ENCODE measurements at regions of chr2 and their contacts with region 1.

Region 1: GRCh38 chr2:162318328-162319180 is at the start of gene IFIH1:
- DNase-seq: peak; percentile 60 to 86 (median 73)
- ATAC-seq: peak; percentile 93
- H3K4me3 ChIP-seq: peak within 1 kb of the TSS; percentile 93
- H3K4me3 Mint-ChIP-seq: peak within 1 kb of the TSS; percentile 89 to 100 (median 95)
- H3K27ac ChIP-seq: peak within 1 kb of the TSS; percentile 85
- H3K27ac Mint-ChIP-seq: peak within 1 kb of the TSS; percentile 97 to 100 (median 99)
- H3K4me1 ChIP-seq: peaks cover 22 to 40% of the 10 kb centered on the region in 2 donors
- H3K4me1 Mint-ChIP-seq: peaks cover 43 to 69% (median 62%) of the 10 kb centered on the region in 7 donors
- H3K27me3 ChIP-seq: no peaks in the 10 kb centered on the region
- H3K27me3 Mint-ChIP-seq: no peaks in the 10 kb centered on the region
- total RNA-seq, gene IFIH1: 20.6 to 77.9 (median 30.7) TPM

Region 2: DNA sequence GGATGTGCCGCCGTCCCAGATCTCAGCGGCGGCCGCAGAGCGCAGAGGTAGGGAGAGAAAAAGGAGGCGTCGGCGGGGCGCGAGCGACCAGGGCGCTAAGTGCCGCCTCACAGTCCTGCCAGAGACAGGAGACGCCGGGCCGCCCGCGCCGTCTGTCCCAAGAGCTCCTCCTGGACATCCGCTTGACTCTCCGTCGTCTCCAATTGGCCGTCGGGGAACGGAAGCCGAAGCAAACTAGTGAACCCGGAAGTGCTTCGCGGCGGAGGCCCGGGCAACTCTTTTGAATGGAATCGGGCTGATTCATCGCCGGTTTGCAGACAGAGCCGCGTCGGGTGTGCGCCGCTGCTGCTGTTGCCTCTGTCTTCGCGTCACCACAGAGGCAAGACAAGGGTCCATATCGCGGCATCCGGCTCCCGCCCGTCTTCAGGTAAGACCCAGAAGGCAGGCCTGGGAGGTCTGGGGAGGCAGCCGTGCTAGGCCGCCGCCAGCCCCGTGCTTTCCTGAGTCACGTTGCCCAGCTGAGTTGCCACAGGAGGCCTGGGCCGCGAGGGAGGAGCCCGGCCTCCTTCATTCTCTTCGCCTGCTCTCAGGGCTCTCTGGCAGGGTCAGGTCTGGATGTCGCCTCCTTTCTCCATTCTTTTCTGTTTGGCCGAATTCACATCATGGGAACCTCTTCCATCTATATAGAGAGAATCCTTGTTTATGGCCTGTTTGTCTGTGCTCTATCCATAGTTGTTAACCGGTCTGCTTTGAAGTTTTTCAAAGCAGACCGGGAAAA is 1010.2 kb before region 1 on chr2 and contains the start of gene PSMD14:
- CTCF ChIA-PET with region 1: no interaction called
- POLR2A ChIA-PET with region 1: no interaction called
- intact Hi-C with region 1: loop called in 1 of 2 experiments (anchors 2 kb)
- DNase-seq: peak; percentile 67 to 88 (median 85)
- ATAC-seq: peak; percentile 95
- H3K4me3 ChIP-seq: peak within 1 kb of the TSS; percentile 94
- H3K4me3 Mint-ChIP-seq: peak within 1 kb of the TSS; percentile 89 to 98 (median 95)
- H3K27ac ChIP-seq: peak within 1 kb of the TSS; percentile 77
- H3K27ac Mint-ChIP-seq: peak within 1 kb of the TSS; percentile 92 to 97 (median 95)
- H3K4me1 ChIP-seq: peaks cover 3 to 19% of the 10 kb centered on the region in 2 donors
- H3K4me1 Mint-ChIP-seq: peaks cover 24 to 65% (median 42%) of the 10 kb centered on the region in 7 donors
- H3K27me3 ChIP-seq: no peaks in the 10 kb centered on the region
- H3K27me3 Mint-ChIP-seq: peaks cover 0 to 9% (median 3%) of the 10 kb centered on the region in 5 donors
- total RNA-seq, gene PSMD14: 13.2 to 69.5 (median 23.2) TPM

Region 3: DNA sequence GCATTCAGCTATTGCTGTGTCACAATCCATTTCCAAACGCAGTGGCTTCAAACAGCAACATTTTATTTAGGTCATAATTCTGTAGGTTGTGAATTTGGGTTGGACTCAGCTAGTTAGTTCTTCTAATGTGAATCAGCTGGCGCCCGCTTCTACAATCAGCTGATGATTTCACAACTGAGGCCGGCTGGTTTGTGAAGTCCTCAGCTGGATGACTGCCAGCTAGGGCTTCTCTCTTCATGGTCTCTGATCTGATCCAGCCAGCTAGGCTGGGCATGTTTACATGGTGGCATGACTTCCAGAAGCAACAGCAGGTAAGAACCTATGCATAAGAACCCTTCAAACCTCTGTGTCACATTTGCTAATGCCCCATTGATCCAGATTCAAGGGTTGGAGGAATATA is 522.4 kb before region 1 on chr2:
- CTCF ChIA-PET with region 1: no interaction called
- POLR2A ChIA-PET with region 1: no interaction called
- intact Hi-C with region 1: no loop called
- DNase-seq: no peak
- ATAC-seq: no peak
- H3K4me3 ChIP-seq: no peak overlapping the region
- H3K4me3 Mint-ChIP-seq: no peak overlapping the region
- H3K27ac ChIP-seq: no peak overlapping the region
- H3K27ac Mint-ChIP-seq: no peak overlapping the region
- H3K4me1 ChIP-seq: no peaks in the 10 kb centered on the region
- H3K4me1 Mint-ChIP-seq: no peaks in the 10 kb centered on the region
- H3K27me3 ChIP-seq: no peaks in the 10 kb centered on the region
- H3K27me3 Mint-ChIP-seq: peaks cover 0 to 23% (median 0%) of the 10 kb centered on the region in 5 donors

Region 4: DNA sequence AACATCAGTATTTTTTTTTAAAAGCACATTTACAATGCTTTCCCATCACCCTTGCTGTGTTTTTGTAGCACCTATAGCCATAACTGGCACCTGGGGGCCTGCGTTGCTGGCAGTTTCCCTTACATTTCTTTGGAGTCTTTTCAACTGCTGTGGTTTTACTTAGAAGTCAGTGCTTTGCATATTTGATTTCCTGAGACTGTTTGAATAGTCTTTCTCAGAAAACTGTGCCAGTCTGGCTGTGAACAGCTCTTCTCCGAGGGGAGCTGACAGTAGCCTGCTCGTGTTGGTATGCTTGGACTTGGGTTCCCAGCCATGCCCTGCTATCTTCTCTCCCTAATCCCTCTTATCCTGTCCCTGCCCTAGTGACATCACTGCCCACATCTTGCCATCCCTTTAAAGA is 326.0 kb before region 1 on chr2:
- CTCF ChIA-PET with region 1: no interaction called
- POLR2A ChIA-PET with region 1: no interaction called
- intact Hi-C with region 1: loop called (anchors 5 kb)
- DNase-seq: peak in 8 of 9 donors; percentile 52 to 78 (median 72)
- ATAC-seq: peak; percentile 86
- H3K4me3 ChIP-seq: peak overlapping the region; percentile 46
- H3K4me3 Mint-ChIP-seq: peak overlapping the region; percentile 80 to 91 (median 86)
- H3K27ac ChIP-seq: peak overlapping the region; percentile 68
- H3K27ac Mint-ChIP-seq: peak overlapping the region; percentile 91 to 100 (median 97)
- H3K4me1 ChIP-seq: peaks cover 26 to 51% of the 10 kb centered on the region in 2 donors
- H3K4me1 Mint-ChIP-seq: peaks cover 35 to 78% (median 66%) of the 10 kb centered on the region in 7 donors
- H3K27me3 ChIP-seq: no peaks in the 10 kb centered on the region
- H3K27me3 Mint-ChIP-seq: no peaks in the 10 kb centered on the region

Region 5: GRCh38 chr2:162058973-162059668 is 259.4 kb before region 1 on chr2:
- CTCF ChIA-PET with region 1: no interaction called
- POLR2A ChIA-PET with region 1: no interaction called
- intact Hi-C with region 1: loop called in 1 of 2 experiments (anchors 5 kb)
- DNase-seq: no peak
- ATAC-seq: peak; percentile 33
- H3K4me3 ChIP-seq: peak overlapping the region; percentile 48
- H3K4me3 Mint-ChIP-seq: peak overlapping the region; percentile 64 to 83 (median 76)
- H3K27ac ChIP-seq: peak overlapping the region; percentile 39
- H3K27ac Mint-ChIP-seq: peak overlapping the region; percentile 45 to 91 (median 84)
- H3K4me1 ChIP-seq: peaks cover 35 to 42% of the 10 kb centered on the region in 2 donors
- H3K4me1 Mint-ChIP-seq: peaks cover 32 to 92% (median 88%) of the 10 kb centered on the region in 7 donors
- H3K27me3 ChIP-seq: no peaks in the 10 kb centered on the region
- H3K27me3 Mint-ChIP-seq: no peaks in the 10 kb centered on the region

Region 6: GRCh38 chr2:162301151-162301804 is 17.3 kb before region 1 on chr2:
- CTCF ChIA-PET with region 1: interaction called, 12 read pairs
- POLR2A ChIA-PET with region 1: interaction called, 5 read pairs
- intact Hi-C with region 1: loop called (anchors 1 to 2 kb)
- DNase-seq: peak in 8 of 9 donors; percentile 26 to 57 (median 53)
- ATAC-seq: peak; percentile 91
- H3K4me3 ChIP-seq: no peak overlapping the region
- H3K4me3 Mint-ChIP-seq: no peak overlapping the region
- H3K27ac ChIP-seq: no peak overlapping the region
- H3K27ac Mint-ChIP-seq: peak overlapping the region in 1 of 9 donors; percentile 43
- H3K4me1 ChIP-seq: peaks cover 0 to 5% of the 10 kb centered on the region in 2 donors
- H3K4me1 Mint-ChIP-seq: peaks cover 0 to 7% (median 0%) of the 10 kb centered on the region in 7 donors
- H3K27me3 ChIP-seq: no peaks in the 10 kb centered on the region
- H3K27me3 Mint-ChIP-seq: no peaks in the 10 kb centered on the region

Region 7: DNA sequence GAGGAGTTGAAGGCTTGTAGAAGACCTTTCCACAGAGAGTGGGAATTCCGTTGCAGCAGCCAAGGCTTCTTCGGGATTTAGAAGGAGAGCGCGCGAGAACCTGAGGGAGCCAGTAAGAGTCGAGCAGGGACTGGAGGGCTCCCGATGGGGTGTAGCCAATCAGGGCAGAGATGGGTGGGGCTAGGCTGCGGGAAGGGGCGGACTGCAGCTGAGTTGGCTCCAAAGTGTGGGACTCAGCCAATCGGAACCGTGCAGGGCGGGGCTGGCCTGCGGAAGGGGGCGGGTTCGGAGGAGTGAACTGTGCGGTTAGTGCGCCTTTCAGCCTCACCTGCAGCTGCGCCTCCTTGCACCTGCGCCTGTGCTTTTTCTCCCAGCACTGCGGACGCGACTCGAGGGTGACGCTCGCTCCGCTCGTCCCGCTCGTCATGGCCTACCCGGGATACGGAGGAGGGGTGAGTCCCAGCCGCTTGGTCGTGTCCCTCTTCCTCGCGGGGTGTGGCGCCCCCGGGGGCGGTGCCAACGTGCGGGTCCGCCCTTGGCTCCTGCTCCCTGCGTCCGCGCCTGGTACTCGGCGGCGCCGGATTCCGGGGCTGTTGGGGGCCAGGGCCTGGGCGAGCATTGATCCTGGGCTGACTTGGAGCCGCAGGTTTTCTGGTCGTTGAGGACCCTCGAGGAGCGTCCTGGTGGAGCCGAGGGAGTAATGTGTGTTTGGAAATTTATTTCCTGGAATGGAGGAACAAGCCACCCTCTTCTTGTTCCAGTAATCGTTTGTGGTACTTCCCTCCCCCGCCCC is 25.5 kb after region 1 on chr2 and contains the start of gene GCA:
- CTCF ChIA-PET with region 1: no interaction called
- POLR2A ChIA-PET with region 1: interaction called, 12 read pairs
- intact Hi-C with region 1: loop called (anchors 1 kb)
- DNase-seq: peak; percentile 96 to 99 (median 98)
- ATAC-seq: peak; percentile 99
- H3K4me3 ChIP-seq: peak within 1 kb of the TSS; percentile 87
- H3K4me3 Mint-ChIP-seq: peak within 1 kb of the TSS; percentile 78 to 96 (median 91)
- H3K27ac ChIP-seq: peak within 1 kb of the TSS; percentile 53
- H3K27ac Mint-ChIP-seq: peak within 1 kb of the TSS; percentile 70 to 92 (median 81)
- H3K4me1 ChIP-seq: peaks cover 4 to 5% of the 10 kb centered on the region in 2 donors
- H3K4me1 Mint-ChIP-seq: peaks cover 0 to 21% (median 19%) of the 10 kb centered on the region in 7 donors
- H3K27me3 ChIP-seq: no peaks in the 10 kb centered on the region
- H3K27me3 Mint-ChIP-seq: peaks cover 0 to 9% (median 0%) of the 10 kb centered on the region in 5 donors
- total RNA-seq, gene GCA: 10.9 to 56.3 (median 13.4) TPM

Region 8: DNA sequence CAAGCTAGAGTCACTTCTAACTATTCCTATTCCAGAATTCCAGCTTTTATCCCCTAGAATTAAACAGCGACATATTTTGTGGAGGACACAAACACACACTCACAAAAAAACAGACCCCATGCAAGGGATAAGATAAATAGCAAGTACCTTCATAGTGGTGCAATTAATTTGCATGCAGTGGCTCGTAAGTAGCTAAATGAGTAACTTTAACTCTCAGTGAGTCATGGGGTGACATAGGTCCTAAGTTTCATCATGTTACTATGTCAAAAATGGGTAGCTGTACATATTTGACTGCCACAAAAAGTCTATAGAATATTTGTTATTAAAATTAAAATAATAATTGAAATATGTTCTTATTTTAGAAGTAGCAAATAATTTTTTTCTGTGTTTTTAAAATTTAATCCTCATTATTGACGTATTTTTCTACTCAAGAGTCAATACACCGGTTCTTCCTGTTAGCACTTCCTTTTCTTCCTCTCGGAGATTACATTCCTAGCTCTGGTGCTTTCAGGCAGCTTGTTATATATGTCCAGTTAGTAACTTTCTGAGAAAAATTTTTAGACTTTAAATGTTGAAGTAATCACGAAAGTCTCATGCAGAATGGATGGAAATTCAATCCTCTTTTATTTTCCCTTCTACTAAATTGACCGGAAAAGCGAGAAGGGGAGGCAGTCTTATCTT is 273.0 kb after region 1 on chr2:
- CTCF ChIA-PET with region 1: no interaction called
- POLR2A ChIA-PET with region 1: no interaction called
- intact Hi-C with region 1: no loop called
- DNase-seq: no peak
- ATAC-seq: no peak
- H3K4me3 ChIP-seq: no peak overlapping the region
- H3K4me3 Mint-ChIP-seq: no peak overlapping the region
- H3K27ac ChIP-seq: no peak overlapping the region
- H3K27ac Mint-ChIP-seq: no peak overlapping the region
- H3K4me1 ChIP-seq: no peaks in the 10 kb centered on the region
- H3K4me1 Mint-ChIP-seq: no peaks in the 10 kb centered on the region
- H3K27me3 ChIP-seq: no peaks in the 10 kb centered on the region
- H3K27me3 Mint-ChIP-seq: no peaks in the 10 kb centered on the region